Left lung (tissue), 14 donors: ENCODE measurements at regions of chr3 and their contacts with region 1.

Region 1: GRCh38 chr3:142129516-142130171 is 19.7 kb downstream of the TFDP2 start:
- DNase-seq: no peak
- ATAC-seq: no peak
- H3K4me3 ChIP-seq: no peak overlapping the region
- H3K27ac ChIP-seq: no peak overlapping the region
- H3K4me1 ChIP-seq: no peaks in the 10 kb centered on the region
- H3K27me3 ChIP-seq: no peaks in the 10 kb centered on the region
- CTCF ChIP-seq: no peak

Region 2: DNA sequence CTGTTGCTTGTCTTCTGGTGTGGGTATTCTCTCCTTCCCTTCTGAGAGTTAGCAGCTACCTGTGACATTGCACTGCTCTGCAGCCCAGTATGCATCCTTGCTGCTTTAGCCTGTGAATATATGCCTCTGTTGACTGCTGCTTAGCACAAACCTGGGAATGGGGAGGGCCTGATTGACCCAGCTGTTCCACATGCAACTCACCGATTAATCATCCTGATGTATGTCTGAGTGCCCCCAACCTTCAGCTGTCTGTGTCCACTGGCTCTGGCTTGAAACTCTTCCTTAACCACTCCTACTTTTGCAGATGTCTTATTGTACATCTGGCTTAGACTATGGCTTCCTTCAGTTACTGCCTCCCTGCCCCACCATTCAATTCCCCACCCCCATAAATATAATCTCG is 523.8 kb before region 1 on chr3:
- intact Hi-C with region 1: no loop called
- DNase-seq: no peak
- ATAC-seq: no peak
- H3K4me3 ChIP-seq: no peak overlapping the region
- H3K27ac ChIP-seq: no peak overlapping the region
- H3K4me1 ChIP-seq: no peaks in the 10 kb centered on the region
- H3K27me3 ChIP-seq: no peaks in the 10 kb centered on the region
- CTCF ChIP-seq: no peak

Region 3: DNA sequence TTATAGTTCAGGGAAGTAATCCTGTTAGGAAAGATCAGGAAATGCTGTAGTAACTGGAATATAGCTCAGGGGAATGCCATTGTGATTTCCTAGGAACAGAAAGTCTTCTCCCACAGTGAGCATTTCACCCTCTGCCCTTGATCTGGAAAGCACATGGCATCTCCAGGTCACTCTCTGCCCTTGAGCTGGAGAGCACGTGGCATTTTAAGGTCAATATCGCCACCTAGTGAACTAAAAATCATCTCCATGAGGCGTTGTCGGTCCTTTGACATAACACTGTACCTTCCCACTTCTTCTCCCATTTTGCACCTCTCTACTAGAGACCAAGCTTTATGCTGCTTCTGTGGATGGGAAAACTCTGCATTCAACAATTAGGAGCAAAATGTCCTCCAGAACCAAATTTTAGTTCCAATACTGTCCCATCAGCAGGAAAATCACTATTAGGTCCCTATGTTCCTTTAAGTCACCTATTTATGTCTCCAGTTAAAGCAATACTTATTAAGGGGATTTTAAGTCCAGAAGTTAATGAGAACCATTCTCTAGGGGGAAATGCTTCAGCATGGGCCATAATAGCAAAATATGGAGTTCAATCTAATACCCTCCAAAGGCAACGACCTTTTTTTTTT is 150.4 kb after region 1 on chr3:
- intact Hi-C with region 1: loop called in 1 of 2 experiments (anchors 5 kb)
- DNase-seq: peak in 3 of 4 donors; percentile 37 to 73 (median 53)
- ATAC-seq: peak; percentile 94
- H3K4me3 ChIP-seq: no peak overlapping the region
- H3K27ac ChIP-seq: no peak overlapping the region
- H3K4me1 ChIP-seq: peaks cover 0 to 32% of the 10 kb centered on the region in 2 donors
- H3K27me3 ChIP-seq: no peaks in the 10 kb centered on the region
- CTCF ChIP-seq: peak; percentile 52 to 71